ENCODE measurements at regions of chr5 and their contacts with region 1.

Region 1: GRCh38 chr5:168706655-168707069 is 127.5 kb upstream of the PANK3 start:
- DNase-seq: no peak

Region 2: DNA sequence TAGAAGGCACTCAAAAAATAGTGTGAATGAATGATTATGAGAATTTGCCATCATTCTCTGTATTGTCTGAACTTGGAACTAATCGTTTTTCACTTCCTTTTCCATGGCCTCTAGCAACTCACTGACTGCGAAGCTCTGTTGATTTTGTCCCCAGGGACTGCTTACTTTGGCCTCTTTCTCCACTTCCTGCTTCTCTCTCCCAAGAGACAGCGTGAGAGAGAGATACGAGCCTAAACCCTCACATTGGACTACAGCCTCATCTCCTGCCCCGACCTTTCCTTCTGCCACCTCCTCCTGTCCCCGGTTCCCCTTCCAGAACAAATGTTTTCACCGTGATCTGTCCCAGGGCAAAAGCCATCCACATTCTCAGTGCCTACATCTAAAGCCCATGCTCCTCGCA is 173.3 kb after region 1 on chr5:
- intact Hi-C with region 1: loop called (anchors 10 kb)
- DNase-seq: no peak

Region 3: DNA sequence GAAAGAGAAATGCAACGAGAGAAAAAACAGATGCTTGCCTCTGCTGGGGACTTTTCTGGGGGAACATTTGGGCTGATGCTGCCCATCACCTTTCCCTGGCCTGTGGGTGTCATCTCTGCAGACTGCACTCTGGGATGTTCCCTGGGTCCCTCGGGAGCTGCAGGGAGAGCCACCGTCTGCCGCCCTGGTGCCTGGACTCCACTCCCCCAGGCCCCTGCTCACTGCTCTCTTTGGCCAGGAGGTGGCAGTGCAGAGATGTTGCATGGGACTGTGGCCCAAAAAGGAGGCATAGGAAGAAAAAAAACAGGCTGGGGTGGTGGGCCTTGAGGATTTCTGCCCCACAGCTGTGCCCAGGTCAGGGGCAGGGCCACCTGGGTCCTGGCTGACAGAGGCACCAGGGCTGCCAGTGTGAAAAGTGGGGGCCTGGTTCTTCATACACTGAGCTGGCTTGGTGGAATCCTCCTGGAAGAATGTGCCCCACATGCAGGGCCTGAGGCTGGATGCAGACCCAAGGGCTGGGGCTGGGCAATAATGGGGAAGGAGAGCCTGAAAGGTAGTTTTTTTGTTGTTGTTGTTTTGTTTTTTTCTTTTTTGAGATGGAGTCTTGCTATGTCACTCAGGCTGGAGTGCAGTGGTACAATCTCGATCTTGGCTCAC is 240.7 kb after region 1 on chr5:
- intact Hi-C with region 1: loop called (anchors 5 kb)
- DNase-seq: no peak